Naive thymus-derived CD4-positive, alpha-beta T cell (primary cell): ENCODE measurements at regions of chr12 and their contacts with region 1.

Region 1: GRCh38 chr12:120856980-120857379 is 47.2 kb downstream of the SPPL3 start:
- DNase-seq: peak in 1 of 9 donors; percentile 10
- ATAC-seq: peak; percentile 46
- H3K4me3 ChIP-seq: no peak overlapping the region
- H3K4me3 Mint-ChIP-seq: peak overlapping the region in 9 of 10 donors; percentile 3 to 81 (median 71)
- H3K27ac ChIP-seq: no peak overlapping the region
- H3K27ac Mint-ChIP-seq: peak overlapping the region in 5 of 9 donors; percentile 3 to 83 (median 59)
- H3K4me1 ChIP-seq: peaks cover 15 to 25% of the 10 kb centered on the region in 2 donors
- H3K4me1 Mint-ChIP-seq: peaks cover 35 to 71% (median 58%) of the 10 kb centered on the region in 7 donors
- H3K27me3 ChIP-seq: no peaks in the 10 kb centered on the region
- H3K27me3 Mint-ChIP-seq: no peaks in the 10 kb centered on the region

Region 2: GRCh38 chr12:120640840-120641833 is 215.8 kb before region 1 on chr12:
- CTCF ChIA-PET with region 1: no interaction called
- POLR2A ChIA-PET with region 1: no interaction called
- intact Hi-C with region 1: loop called in 1 of 2 experiments (anchors 10 kb)
- DNase-seq: peak; percentile 28 to 66 (median 54)
- ATAC-seq: peak; percentile 81
- H3K4me3 ChIP-seq: peak overlapping the region; percentile 44
- H3K4me3 Mint-ChIP-seq: peak overlapping the region; percentile 64 to 84 (median 73)
- H3K27ac ChIP-seq: no peak overlapping the region
- H3K27ac Mint-ChIP-seq: no peak overlapping the region
- H3K4me1 ChIP-seq: peaks cover 4 to 8% of the 10 kb centered on the region in 2 donors
- H3K4me1 Mint-ChIP-seq: peaks cover 0 to 10% (median 6%) of the 10 kb centered on the region in 7 donors
- H3K27me3 ChIP-seq: peaks cover 19 to 26% of the 10 kb centered on the region in 2 donors
- H3K27me3 Mint-ChIP-seq: peaks cover 41 to 72% (median 45%) of the 10 kb centered on the region in 5 donors

Region 3: DNA sequence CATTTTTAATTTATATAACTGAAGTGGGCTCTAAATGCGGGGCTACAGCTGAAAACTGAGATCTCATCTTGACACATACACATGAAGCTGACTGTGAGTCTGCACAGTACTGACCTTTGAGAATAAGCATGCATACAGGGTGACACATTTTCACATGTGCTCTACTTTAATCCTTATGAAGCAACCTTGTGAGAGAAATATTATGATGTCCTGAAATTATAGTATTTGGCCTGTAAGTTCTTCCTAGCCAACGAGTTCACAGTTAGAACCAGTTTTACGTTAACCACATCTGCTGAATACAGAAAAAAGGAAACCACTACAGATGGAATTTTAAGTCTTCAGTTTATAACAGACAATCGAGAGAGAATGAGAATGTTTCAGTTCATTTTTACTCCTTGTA is 23.1 kb before region 1 on chr12:
- CTCF ChIA-PET with region 1: no interaction called
- POLR2A ChIA-PET with region 1: no interaction called
- intact Hi-C with region 1: loop called in 1 of 2 experiments (anchors 2 kb)
- DNase-seq: no peak
- ATAC-seq: no peak
- H3K4me3 ChIP-seq: no peak overlapping the region
- H3K4me3 Mint-ChIP-seq: peak overlapping the region in 4 of 10 donors; percentile 14 to 78 (median 46)
- H3K27ac ChIP-seq: no peak overlapping the region
- H3K27ac Mint-ChIP-seq: peak overlapping the region in 2 of 9 donors; percentile 3 to 10
- H3K4me1 ChIP-seq: peaks cover 0 to 40% of the 10 kb centered on the region in 2 donors
- H3K4me1 Mint-ChIP-seq: peaks cover 31 to 85% (median 67%) of the 10 kb centered on the region in 7 donors
- H3K27me3 ChIP-seq: no peaks in the 10 kb centered on the region
- H3K27me3 Mint-ChIP-seq: no peaks in the 10 kb centered on the region

Region 4: DNA sequence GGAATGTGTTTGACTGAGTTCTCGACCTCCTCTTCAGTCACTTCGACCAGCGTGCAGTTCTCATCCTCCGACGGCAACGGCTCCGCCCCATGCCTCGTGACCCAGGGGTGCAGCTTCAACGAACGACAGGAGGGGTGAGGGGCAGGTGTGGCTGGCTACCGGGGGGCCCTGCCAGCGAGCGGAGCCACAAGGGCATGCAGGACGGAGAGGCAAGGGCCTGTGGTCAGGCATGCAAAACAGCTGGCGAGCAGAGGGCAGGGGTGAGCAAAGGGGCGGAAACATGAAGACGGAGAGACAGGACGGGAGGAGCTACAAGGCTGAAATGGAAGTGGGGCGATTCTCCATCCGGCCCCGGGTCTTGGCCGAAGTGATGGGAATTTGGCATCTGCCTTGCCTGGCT is 391.6 kb after region 1 on chr12:
- CTCF ChIA-PET with region 1: no interaction called
- POLR2A ChIA-PET with region 1: no interaction called
- intact Hi-C with region 1: no loop called
- DNase-seq: no peak
- ATAC-seq: no peak
- H3K4me3 ChIP-seq: no peak overlapping the region
- H3K4me3 Mint-ChIP-seq: no peak overlapping the region
- H3K27ac ChIP-seq: no peak overlapping the region
- H3K27ac Mint-ChIP-seq: no peak overlapping the region
- H3K4me1 ChIP-seq: no peaks in the 10 kb centered on the region
- H3K4me1 Mint-ChIP-seq: peaks cover 0 to 5% (median 2%) of the 10 kb centered on the region in 7 donors
- H3K27me3 ChIP-seq: no peaks in the 10 kb centered on the region
- H3K27me3 Mint-ChIP-seq: no peaks in the 10 kb centered on the region